ENCODE measurements at regions of chr3 and their contacts with region 1.

Region 1: DNA sequence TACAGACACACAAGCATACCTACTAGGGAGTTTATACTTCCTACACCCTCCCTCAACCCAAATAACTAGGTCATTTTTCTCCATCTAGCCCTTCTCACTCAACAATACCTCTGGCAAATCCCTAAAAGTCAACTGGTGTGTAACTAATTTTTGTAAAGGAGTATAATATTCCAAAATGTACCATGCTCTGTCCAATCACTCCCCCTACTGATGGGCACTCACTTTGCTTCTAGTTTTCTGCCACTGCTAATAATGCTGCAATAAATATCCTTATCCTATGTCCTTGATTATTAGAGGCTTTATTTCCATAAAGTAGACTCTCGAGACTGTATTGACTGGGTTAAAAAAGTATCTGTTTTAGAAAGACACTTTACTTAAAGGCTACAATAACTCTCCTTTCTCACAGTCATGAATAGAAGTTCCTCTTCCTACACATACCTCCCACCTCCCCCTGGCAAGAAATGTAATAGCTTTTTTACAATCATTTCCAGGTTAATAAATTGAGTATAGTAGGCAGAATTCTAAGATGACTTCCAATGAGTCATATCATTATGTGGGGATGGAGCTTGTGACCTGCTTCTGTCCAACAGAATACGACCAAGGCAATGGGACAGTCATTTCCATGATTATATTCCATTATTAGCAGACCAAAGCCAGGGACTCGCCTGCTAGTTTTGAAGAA is 30.0 kb downstream of the SHQ1 start:
- DNase-seq: no peak
- ATAC-seq: no peak
- H3K4me3 Mint-ChIP-seq: no peak overlapping the region
- H3K27ac Mint-ChIP-seq: no peak overlapping the region
- H3K4me1 Mint-ChIP-seq: peaks cover 14% of the 10 kb centered on the region
- H3K27me3 Mint-ChIP-seq: no peaks in the 10 kb centered on the region

Region 2: GRCh38 chr3:71710906-71711494 is 1107.2 kb before region 1 on chr3:
- CTCF ChIA-PET with region 1: interaction called, 12 read pairs
- POLR2A ChIA-PET with region 1: no interaction called
- DNase-seq: no peak
- ATAC-seq: peak; percentile 67
- H3K4me3 Mint-ChIP-seq: no peak overlapping the region
- H3K27ac Mint-ChIP-seq: no peak overlapping the region
- H3K4me1 Mint-ChIP-seq: peaks cover 69% of the 10 kb centered on the region
- H3K27me3 Mint-ChIP-seq: no peaks in the 10 kb centered on the region

Region 3: GRCh38 chr3:71875461-71875947 is 942.7 kb before region 1 on chr3:
- CTCF ChIA-PET with region 1: interaction called, 82 read pairs
- POLR2A ChIA-PET with region 1: no interaction called
- DNase-seq: peak; percentile 83
- ATAC-seq: peak; percentile 95
- H3K4me3 Mint-ChIP-seq: no peak overlapping the region
- H3K27ac Mint-ChIP-seq: no peak overlapping the region
- H3K4me1 Mint-ChIP-seq: peaks cover 21% of the 10 kb centered on the region
- H3K27me3 Mint-ChIP-seq: peaks cover under 1% of the 10 kb centered on the region

Region 4: DNA sequence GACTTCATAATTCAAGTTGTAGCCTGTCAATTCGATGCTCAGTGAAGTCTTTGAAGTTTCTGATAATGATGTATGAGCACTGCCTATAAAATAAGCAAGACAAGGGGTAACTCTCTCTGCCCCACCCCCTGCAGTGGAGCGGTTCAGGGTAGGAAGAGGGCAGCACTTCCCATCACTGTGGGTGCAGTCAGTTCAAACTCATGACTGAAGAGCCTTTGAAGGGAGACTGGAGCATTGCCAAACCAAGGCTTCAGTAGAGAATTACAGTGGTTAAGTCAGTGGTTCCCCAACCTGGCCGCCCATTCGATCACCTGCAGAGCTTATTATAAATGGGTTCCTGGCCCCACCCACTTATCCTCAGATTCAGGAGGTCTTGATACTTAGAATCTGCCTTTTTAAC is 160.6 kb before region 1 on chr3:
- CTCF ChIA-PET with region 1: interaction called, 189 read pairs
- POLR2A ChIA-PET with region 1: no interaction called
- DNase-seq: peak; percentile 64
- ATAC-seq: peak; percentile 85
- H3K4me3 Mint-ChIP-seq: no peak overlapping the region
- H3K27ac Mint-ChIP-seq: no peak overlapping the region
- H3K4me1 Mint-ChIP-seq: peaks cover 13% of the 10 kb centered on the region
- H3K27me3 Mint-ChIP-seq: peaks cover 12% of the 10 kb centered on the region

Region 5: GRCh38 chr3:72722930-72723726 is 95.1 kb before region 1 on chr3:
- CTCF ChIA-PET with region 1: interaction called, 10 read pairs
- POLR2A ChIA-PET with region 1: no interaction called
- DNase-seq: no peak
- ATAC-seq: no peak
- H3K4me3 Mint-ChIP-seq: no peak overlapping the region
- H3K27ac Mint-ChIP-seq: no peak overlapping the region
- H3K4me1 Mint-ChIP-seq: peaks cover 2% of the 10 kb centered on the region
- H3K27me3 Mint-ChIP-seq: no peaks in the 10 kb centered on the region

Region 6: GRCh38 chr3:72830452-72831217 is 12.4 kb after region 1 on chr3:
- CTCF ChIA-PET with region 1: interaction called, 15 read pairs
- POLR2A ChIA-PET with region 1: no interaction called
- DNase-seq: no peak
- ATAC-seq: no peak
- H3K4me3 Mint-ChIP-seq: no peak overlapping the region
- H3K27ac Mint-ChIP-seq: no peak overlapping the region
- H3K4me1 Mint-ChIP-seq: no peaks in the 10 kb centered on the region
- H3K27me3 Mint-ChIP-seq: no peaks in the 10 kb centered on the region

Region 7: GRCh38 chr3:72847751-72848702 is 29.8 kb after region 1 on chr3 and contains the start of gene SHQ1:
- CTCF ChIA-PET with region 1: interaction called, 14 read pairs
- POLR2A ChIA-PET with region 1: no interaction called
- DNase-seq: peak; percentile 97
- ATAC-seq: peak; percentile 95
- H3K4me3 Mint-ChIP-seq: peak within 1 kb of the TSS; percentile 94
- H3K27ac Mint-ChIP-seq: peak within 1 kb of the TSS; percentile 84
- H3K4me1 Mint-ChIP-seq: peaks cover 49% of the 10 kb centered on the region
- H3K27me3 Mint-ChIP-seq: no peaks in the 10 kb centered on the region
- total RNA-seq, gene SHQ1: 27.2 to 28.0 TPM

Region 8: DNA sequence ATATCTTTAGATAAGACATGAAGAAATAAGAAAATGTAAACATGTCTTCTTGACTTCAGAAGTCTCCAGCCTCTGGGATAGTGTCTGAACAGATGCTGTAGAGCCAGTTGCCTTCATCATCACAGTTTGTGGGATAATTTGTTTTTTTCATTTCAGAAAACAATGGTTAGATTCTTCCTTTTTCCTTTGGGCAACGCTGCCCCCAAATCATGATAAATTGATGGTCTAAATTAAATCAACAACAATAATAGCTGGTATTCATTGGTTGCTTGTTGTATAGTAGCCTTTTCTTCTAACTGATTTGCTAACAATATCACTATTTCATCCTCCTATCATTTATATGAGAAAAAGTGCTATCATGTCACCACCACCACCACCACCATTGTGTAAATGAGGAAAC is 42.6 kb after region 1 on chr3:
- CTCF ChIA-PET with region 1: no interaction called
- POLR2A ChIA-PET with region 1: no interaction called
- DNase-seq: no peak
- ATAC-seq: no peak
- H3K4me3 Mint-ChIP-seq: no peak overlapping the region
- H3K27ac Mint-ChIP-seq: no peak overlapping the region
- H3K4me1 Mint-ChIP-seq: no peaks in the 10 kb centered on the region
- H3K27me3 Mint-ChIP-seq: no peaks in the 10 kb centered on the region

Measured in activated CD8-positive, alpha-beta T cell treated with anti-CD3 and anti-CD28 coated beads, Interleukin-2, amount 10 ng/mL, durations not matched to agents 7 days and 5 days (primary cell).